ENCODE measurements at regions of chr1 and their contacts with region 1.

Region 1: DNA sequence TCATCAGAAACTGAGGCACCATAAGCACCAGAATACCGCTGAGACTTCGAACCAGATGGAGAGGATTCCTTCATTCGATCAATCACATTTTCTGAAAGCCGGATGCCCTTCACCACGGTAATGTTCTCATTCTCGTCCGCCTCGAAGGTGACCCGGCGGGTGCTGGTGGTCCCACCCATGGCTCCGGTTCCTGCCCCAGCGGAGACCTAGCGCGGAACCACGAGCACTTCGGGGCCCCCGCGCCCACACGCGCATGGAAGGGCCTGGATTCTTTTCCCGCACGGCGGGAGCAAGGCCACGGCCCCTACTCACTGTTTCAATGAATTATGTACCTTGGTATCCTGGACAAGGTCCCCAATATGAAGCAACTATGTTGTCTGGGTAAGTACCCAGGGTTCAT is 33.1 kb upstream of the WDTC1 start:
- DNase-seq: no peak
- H3K4me3 Mint-ChIP-seq: no peak overlapping the region
- H3K27ac Mint-ChIP-seq: no peak overlapping the region
- H3K4me1 Mint-ChIP-seq: peaks cover 6% of the 10 kb centered on the region
- H3K27me3 Mint-ChIP-seq: peaks cover 6% of the 10 kb centered on the region

Region 2: GRCh38 chr1:27102707-27103491 is 98.4 kb before region 1 on chr1:
- intact Hi-C with region 1: loop called (anchors 1 kb)
- DNase-seq: peak; percentile 69
- H3K4me3 Mint-ChIP-seq: no peak overlapping the region
- H3K27ac Mint-ChIP-seq: no peak overlapping the region
- H3K4me1 Mint-ChIP-seq: peaks cover 17% of the 10 kb centered on the region
- H3K27me3 Mint-ChIP-seq: no peaks in the 10 kb centered on the region

Region 3: DNA sequence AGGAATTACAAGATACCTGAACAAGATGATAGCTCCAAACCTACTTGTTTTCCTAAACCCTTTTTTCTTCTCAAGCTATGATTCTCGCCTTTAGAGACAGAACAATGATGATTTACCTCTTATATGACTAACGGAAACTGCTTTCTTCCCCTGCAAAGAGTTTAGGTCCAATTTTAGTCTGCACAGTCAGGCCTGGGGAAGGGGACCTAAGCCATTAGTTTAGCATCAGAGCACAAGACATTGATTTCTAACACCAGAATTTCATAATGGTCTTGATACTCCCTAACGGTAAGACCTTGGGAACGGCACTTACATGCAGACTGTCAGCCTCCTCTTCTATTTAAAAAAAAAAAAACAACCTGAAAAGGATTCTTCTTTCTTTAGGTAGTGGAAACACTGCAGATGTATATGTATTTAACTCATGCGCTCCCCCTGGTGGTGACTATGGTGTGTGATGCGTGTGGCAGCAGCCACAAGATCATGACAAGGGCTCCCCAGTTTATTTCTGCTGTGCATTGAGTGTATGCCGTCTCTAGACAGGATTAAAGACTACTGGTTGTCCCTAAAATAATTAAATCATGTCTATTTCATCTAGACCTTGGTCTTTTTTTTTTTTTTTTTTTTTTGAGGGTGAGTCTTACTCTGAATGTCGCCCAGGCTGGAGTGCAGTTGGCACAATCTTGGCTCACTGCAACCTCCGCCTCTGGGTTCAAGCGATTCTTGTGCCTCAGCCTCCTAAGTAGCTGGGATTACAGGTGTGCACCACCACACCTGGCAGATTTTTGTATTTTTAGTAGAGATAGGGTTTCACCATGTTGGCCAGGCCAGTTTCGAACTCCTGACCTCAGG is 83.4 kb after region 1 on chr1:
- intact Hi-C with region 1: loop called (anchors 1 kb)
- DNase-seq: peak; percentile 74
- H3K4me3 Mint-ChIP-seq: no peak overlapping the region
- H3K27ac Mint-ChIP-seq: no peak overlapping the region
- H3K4me1 Mint-ChIP-seq: peaks cover 6% of the 10 kb centered on the region
- H3K27me3 Mint-ChIP-seq: peaks cover 4% of the 10 kb centered on the region

Region 4: DNA sequence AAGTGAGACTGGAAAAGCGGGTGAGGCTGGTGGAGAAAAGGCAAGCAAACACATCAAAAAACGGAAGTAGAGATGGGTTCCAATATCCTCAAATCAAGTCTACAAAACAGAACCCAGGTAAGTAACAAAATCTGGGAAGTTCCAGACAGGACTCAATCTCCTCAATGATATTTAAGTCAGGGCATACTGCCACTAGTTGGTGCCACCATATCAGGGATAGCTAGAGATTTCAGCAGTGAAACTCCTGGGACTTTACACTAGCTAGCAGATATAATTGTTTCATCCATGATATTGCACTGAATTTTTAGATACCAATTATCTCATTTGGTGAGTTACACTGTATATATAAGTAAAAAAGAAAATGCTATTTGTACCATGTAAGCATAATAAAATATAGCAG is 835.1 kb after region 1 on chr1:
- intact Hi-C with region 1: no loop called
- DNase-seq: no peak
- H3K4me3 Mint-ChIP-seq: no peak overlapping the region
- H3K27ac Mint-ChIP-seq: no peak overlapping the region
- H3K4me1 Mint-ChIP-seq: no peaks in the 10 kb centered on the region
- H3K27me3 Mint-ChIP-seq: no peaks in the 10 kb centered on the region

Measured in activated T-helper 1 cell treated with anti-CD3 and anti-CD28 coated beads, Interleukin-12 subunit alpha, Interleukin-12 subunit beta, Interleukin-2, Interleukin-4 antibody, amounts not matched to agents 30 ng/mL and 10 ng/mL and 1 ng/mL, durations not matched to agents 14 hours and 24 hours and 36 hours (primary cell).